ENCODE measurements at regions of chr1 and their contacts with region 1.

Region 1: GRCh38 chr1:207828485-207829158 is 76.8 kb downstream of the CD46 start:
- DNase-seq: peak; percentile 73
- ATAC-seq: peak; percentile 95
- H3K4me3 ChIP-seq: no peak overlapping the region
- H3K27ac ChIP-seq: no peak overlapping the region
- H3K4me1 ChIP-seq: peaks cover 8% of the 10 kb centered on the region in 2 experiments; a peak in 2 of 4 replicates
- H3K27me3 ChIP-seq: no peaks in the 10 kb centered on the region
- CTCF ChIP-seq: peak; percentile 83 to 92 (median 85)
- POLR2A ChIP-seq: no peak
- RAD21 ChIP-seq: peak; percentile 89

Region 2: GRCh38 chr1:207868774-207869721 is 40.4 kb after region 1 on chr1:
- CTCF ChIA-PET with region 1: interaction called, 30 read pairs
- POLR2A ChIA-PET with region 1: no interaction called
- RAD21 ChIA-PET with region 1: interaction called, 4 to 8 read pairs
- intact Hi-C with region 1: loop called (anchors 1 kb)
- DNase-seq: peak; percentile 29
- ATAC-seq: peak; percentile 85
- H3K4me3 ChIP-seq: peak overlapping the region; percentile 74 to 92
- H3K27ac ChIP-seq: peak overlapping the region; percentile 49; the same call in 1 of the 2 replicates
- H3K4me1 ChIP-seq: peaks cover 2 to 20% of the 10 kb centered on the region in 2 experiments; a peak in 2 of 4 replicates
- H3K27me3 ChIP-seq: no peaks in the 10 kb centered on the region
- CTCF ChIP-seq: peak; percentile 51 to 71 (median 54); a peak in 5 of 6 replicates
- POLR2A ChIP-seq: peak; percentile 32
- RAD21 ChIP-seq: peak; percentile 44

Region 3: DNA sequence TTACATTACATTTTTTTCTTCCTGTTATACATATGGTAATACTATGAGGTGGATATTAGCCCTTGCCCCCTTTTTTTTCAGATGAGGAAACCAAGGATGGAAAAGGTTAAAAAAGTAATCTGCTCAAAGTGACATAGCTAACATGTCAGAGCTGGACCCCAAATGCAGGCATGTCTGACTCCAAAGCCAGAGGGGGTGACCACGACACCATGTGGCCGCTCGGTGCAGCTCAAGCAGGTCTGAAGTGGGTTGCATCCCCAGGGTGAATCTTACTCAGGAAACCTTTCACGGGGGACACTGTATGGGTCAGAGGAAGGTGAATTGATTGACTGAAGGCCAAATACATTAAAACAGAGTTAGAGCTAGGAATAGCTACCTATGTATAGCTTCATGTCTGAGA is 47.5 kb after region 1 on chr1:
- CTCF ChIA-PET with region 1: interaction called, 17 read pairs
- POLR2A ChIA-PET with region 1: no interaction called
- RAD21 ChIA-PET with region 1: interaction called in 1 of 2 experiments, 3 read pairs
- intact Hi-C with region 1: no loop called
- DNase-seq: no peak
- ATAC-seq: peak; percentile 89
- H3K4me3 ChIP-seq: no peak overlapping the region
- H3K27ac ChIP-seq: no peak overlapping the region
- H3K4me1 ChIP-seq: no peaks in the 10 kb centered on the region
- H3K27me3 ChIP-seq: no peaks in the 10 kb centered on the region
- CTCF ChIP-seq: peak; percentile 45 to 53 (median 49); a peak in 4 of 6 replicates
- POLR2A ChIP-seq: no peak
- RAD21 ChIP-seq: peak; percentile 46; the same call in 1 of the 2 replicates

Measured in HCT116 (cell line).